ENCODE measurements at regions of chr3 and their contacts with region 1.

Region 1: DNA sequence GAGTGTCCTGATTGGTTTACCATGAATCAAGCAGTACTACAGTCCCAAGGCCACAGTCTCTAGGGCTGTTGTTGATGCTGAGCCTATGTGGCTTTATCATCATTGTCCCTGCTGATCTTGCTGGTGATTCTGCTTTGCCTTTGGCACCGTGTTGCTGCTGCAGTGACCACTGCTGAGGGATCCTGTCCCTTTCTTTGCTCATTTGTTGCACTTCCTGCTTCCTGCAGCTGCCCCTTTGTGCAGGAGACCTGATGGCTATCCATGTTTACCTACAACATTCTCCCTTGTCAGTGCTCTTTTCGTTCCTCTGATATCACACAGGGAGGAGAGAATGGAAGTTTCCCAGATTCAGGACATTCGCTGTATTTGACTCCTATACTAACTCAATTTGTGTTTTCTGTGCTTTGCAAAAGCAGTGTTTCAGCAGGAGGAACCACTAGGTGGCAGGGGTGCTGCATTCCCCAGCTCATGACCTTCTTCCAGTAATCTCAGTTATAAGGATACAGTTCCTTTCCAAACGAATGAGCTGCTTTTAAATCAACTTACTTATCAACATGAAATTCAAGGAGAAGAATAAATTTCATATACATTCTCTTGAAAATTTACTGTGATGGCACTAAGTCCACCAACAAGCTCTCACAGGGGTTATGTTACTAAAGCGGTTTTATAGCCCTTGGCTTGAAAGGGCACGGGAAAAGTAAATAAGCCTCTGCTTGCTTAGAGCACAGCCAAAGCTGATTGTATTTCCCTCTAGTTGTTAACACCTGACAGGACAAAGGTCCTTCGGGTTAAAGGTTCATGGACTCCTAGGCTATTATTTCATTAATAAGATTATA is 9.7 kb upstream of the THUMPD3 start:
- DNase-seq: peak; percentile 70
- H3K4me3 Mint-ChIP-seq: no peak overlapping the region
- H3K27ac Mint-ChIP-seq: no peak overlapping the region
- H3K4me1 Mint-ChIP-seq: peaks cover 27% of the 10 kb centered on the region
- H3K27me3 Mint-ChIP-seq: no peaks in the 10 kb centered on the region

Region 2: GRCh38 chr3:9260305-9260704 is 92.8 kb before region 1 on chr3:
- CTCF ChIA-PET with region 1: no interaction called
- POLR2A ChIA-PET with region 1: no interaction called
- intact Hi-C with region 1: no loop called
- DNase-seq: no peak
- H3K4me3 Mint-ChIP-seq: no peak overlapping the region
- H3K27ac Mint-ChIP-seq: no peak overlapping the region
- H3K4me1 Mint-ChIP-seq: no peaks in the 10 kb centered on the region
- H3K27me3 Mint-ChIP-seq: peaks cover 6% of the 10 kb centered on the region

Region 3: DNA sequence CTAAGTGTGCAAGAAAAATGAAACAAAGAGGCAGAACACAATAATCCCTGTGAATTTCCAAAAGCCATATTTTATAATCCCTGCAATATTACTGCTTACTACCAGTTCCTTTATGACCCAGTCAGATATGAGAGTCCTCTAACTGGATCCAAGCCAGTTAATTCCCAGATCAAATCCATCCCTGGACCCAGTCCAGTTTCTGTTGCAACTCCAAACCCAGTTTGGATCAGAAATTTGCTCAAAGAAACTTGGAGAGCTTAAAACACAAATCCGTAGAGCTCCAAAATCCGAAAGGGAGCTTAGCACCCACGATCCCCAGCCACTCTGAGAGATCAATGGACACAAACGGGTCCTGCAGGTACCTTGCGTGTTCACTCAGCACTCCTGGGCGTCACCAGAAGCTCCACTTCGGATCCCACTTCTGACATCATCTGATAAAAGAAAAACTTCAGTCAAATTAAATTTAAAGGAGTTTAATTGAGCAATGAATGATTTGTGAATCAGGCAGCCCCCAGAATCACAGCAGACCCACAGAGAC is 22.9 kb before region 1 on chr3:
- CTCF ChIA-PET with region 1: no interaction called
- POLR2A ChIA-PET with region 1: no interaction called
- intact Hi-C with region 1: no loop called
- DNase-seq: no peak
- H3K4me3 Mint-ChIP-seq: no peak overlapping the region
- H3K27ac Mint-ChIP-seq: no peak overlapping the region
- H3K4me1 Mint-ChIP-seq: no peaks in the 10 kb centered on the region
- H3K27me3 Mint-ChIP-seq: peaks cover 1% of the 10 kb centered on the region

Region 4: GRCh38 chr3:9422712-9423424 is 69.7 kb after region 1 on chr3:
- CTCF ChIA-PET with region 1: interaction called, 8 read pairs
- POLR2A ChIA-PET with region 1: no interaction called
- intact Hi-C with region 1: loop called (anchors 1 kb)
- DNase-seq: peak; percentile 40
- H3K4me3 Mint-ChIP-seq: no peak overlapping the region
- H3K27ac Mint-ChIP-seq: peak overlapping the region; percentile 90
- H3K4me1 Mint-ChIP-seq: peaks cover 39% of the 10 kb centered on the region
- H3K27me3 Mint-ChIP-seq: no peaks in the 10 kb centered on the region

Region 5: GRCh38 chr3:9503283-9503682 is 150.1 kb after region 1 on chr3:
- CTCF ChIA-PET with region 1: interaction called, 10 read pairs
- POLR2A ChIA-PET with region 1: no interaction called
- intact Hi-C with region 1: no loop called
- DNase-seq: peak; percentile 83
- H3K4me3 Mint-ChIP-seq: no peak overlapping the region
- H3K27ac Mint-ChIP-seq: no peak overlapping the region
- H3K4me1 Mint-ChIP-seq: peaks cover 7% of the 10 kb centered on the region
- H3K27me3 Mint-ChIP-seq: peaks cover 31% of the 10 kb centered on the region

Region 6: DNA sequence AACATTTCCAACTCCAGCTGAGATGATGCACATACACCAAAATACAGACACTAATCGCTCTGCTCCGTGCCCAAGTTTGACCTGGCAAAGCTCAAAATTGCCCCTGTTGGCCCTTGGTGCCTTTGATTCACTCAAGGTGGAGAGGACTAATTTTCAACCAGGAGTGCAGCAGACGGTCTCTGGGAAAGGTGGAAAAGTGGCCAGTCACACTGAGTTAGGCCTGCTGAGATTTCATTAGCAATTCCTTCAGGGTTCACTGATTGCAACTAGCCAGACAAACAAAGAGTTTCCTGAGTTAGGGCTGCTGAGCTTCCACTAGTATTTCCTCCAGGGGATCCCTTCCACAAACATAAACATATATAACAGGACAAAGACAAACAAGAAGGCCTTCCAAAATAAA is 229.2 kb after region 1 on chr3:
- CTCF ChIA-PET with region 1: no interaction called
- POLR2A ChIA-PET with region 1: no interaction called
- intact Hi-C with region 1: no loop called
- DNase-seq: no peak
- H3K4me3 Mint-ChIP-seq: no peak overlapping the region
- H3K27ac Mint-ChIP-seq: no peak overlapping the region
- H3K4me1 Mint-ChIP-seq: no peaks in the 10 kb centered on the region
- H3K27me3 Mint-ChIP-seq: peaks cover 2% of the 10 kb centered on the region

Region 7: DNA sequence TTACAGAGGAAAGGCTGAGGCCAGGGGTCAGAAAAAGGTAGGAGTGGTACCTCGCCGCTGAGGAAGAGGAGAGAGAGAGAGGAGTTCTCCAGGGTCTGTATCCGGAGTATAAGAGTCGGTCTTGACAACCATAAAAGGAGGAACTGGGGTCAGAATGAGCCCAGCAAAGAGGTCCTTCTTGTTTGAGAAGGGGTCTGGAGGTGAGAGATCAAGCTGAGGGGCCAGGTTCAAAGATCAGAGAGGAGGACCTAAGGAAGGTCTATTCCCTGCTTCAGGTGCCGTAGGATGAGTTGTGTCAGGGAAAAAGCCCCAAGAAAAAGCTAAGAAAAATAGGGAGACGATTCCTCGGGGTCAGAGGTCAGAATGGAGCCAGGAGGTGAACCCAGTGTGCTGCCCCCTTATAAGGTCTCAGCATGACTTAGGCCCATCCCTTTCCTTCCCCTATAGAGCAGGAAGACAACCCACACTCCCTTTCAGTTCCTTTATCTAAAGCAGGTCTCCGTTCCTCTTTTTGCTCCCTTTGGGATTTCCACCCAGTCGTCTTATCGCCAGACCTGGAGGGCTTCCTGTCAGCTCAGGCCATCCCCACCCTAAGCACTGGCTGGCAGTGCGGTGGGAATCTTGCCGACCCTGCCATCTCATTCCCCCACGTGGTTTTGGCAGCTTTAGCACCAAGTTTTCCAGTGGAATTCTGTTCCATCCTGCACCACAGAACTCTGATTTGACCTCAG is 296.8 kb after region 1 on chr3:
- CTCF ChIA-PET with region 1: interaction called, 4 read pairs
- POLR2A ChIA-PET with region 1: no interaction called
- intact Hi-C with region 1: loop called (anchors 5 kb)
- DNase-seq: no peak
- H3K4me3 Mint-ChIP-seq: peak overlapping the region; percentile 95
- H3K27ac Mint-ChIP-seq: peak overlapping the region; percentile 73
- H3K4me1 Mint-ChIP-seq: peaks cover 29% of the 10 kb centered on the region
- H3K27me3 Mint-ChIP-seq: no peaks in the 10 kb centered on the region

Measured in activated CD4-positive, alpha-beta memory T cell treated with anti-CD3 and anti-CD28 coated beads for 36 hours (primary cell).